ENCODE measurements at regions of chr20 and their contacts with region 1.

Region 1: DNA sequence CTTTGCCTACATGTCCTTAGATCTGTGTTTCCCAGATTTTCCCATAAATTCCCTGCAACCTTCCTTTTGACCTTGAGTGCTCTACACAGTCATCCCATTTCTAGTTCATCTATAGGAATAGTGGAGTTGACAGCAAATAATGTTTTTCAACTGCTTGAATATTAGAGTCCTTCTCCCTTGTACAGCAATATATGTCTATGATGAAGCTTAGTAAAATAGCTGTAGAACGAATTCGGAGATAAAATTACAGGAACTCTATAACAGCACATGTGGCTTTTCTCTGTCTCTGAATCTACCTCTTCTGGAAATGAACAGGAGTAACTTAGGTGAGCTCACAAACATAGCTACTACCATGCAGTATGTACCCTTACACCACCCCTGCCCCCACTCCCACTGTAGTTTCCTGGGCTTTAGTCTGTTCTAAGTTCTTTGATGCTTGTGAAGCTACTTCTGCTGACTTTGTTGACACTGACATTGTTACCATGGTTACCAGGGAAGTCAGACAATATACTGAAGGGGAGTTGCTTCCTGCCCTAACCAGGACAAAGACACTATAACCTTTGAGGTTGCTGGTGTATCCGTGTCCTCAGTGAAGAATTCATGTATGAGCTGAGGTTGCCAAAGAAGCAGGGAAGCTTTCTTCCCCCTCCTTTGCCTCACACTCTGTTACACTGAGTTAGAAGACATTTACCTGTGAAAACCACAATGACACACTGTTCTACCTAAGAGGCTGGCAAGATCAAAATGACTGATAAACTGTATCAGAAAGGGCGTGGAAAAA is 35.8 kb upstream of the SHLD1 start:
- DNase-seq: peak; percentile 28 to 98 (median 96)
- ATAC-seq: peak; percentile 94
- H3K4me3 ChIP-seq: peak overlapping the region; percentile 3
- H3K4me3 Mint-ChIP-seq: peak overlapping the region; percentile 52 to 81 (median 72)
- H3K27ac ChIP-seq: peak overlapping the region; percentile 87
- H3K27ac Mint-ChIP-seq: peak overlapping the region; percentile 81 to 100 (median 95)
- H3K4me1 ChIP-seq: peaks cover 21 to 28% of the 10 kb centered on the region in 2 donors
- H3K4me1 Mint-ChIP-seq: peaks cover 15 to 59% (median 51%) of the 10 kb centered on the region in 7 donors
- H3K27me3 ChIP-seq: no peaks in the 10 kb centered on the region
- H3K27me3 Mint-ChIP-seq: peaks cover 0 to 4% (median 0%) of the 10 kb centered on the region in 5 donors

Region 2: DNA sequence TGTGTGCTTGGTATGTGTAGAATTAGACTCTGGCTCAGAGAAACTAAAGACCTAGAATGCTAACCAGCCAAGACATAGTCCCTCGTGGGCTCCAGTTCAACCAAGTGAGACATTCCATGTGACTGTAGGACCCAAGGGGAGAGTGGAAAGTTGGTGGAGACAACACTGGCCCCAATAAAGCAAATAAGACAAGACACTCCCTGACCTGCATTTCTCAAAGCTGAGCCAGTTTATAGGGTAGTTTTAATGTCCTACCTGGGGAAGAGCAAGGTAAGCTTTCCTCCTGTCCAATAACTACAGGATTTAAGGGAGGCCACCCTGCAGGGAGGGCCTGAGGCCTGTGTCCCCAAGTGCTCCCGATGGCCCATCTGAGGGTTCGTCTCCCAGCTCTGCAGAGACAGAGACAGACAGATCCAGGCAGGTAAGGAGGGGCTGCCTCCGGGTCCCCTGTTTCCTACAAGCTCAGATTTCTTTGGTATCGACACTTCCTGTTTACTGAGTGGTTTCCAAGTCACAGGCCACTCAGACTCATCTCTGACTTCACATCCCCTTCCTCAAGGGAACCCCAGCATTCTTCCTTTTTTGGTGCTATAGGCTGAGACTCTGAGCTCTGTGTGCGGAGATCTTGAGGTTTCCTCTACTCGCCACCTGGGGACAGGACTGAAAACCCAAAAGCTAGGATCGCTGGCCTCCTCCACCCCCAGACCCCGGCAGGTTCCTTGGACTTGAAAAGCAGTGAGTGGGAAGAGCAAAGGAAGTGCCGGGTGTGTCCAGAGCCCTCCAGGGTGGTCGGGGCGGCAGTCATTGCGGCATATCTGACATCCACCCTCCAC is 900.4 kb before region 1 on chr20:
- CTCF ChIA-PET with region 1: no interaction called
- POLR2A ChIA-PET with region 1: no interaction called
- intact Hi-C with region 1: loop called in 1 of 2 experiments (anchors 10 kb)
- DNase-seq: peak; percentile 40 to 91 (median 88)
- ATAC-seq: peak; percentile 80
- H3K4me3 ChIP-seq: peak overlapping the region; percentile 86
- H3K4me3 Mint-ChIP-seq: peak overlapping the region; percentile 78 to 99 (median 92)
- H3K27ac ChIP-seq: peak overlapping the region; percentile 98
- H3K27ac Mint-ChIP-seq: peak overlapping the region; percentile 97 to 100 (median 99)
- H3K4me1 ChIP-seq: peaks cover 68 to 69% of the 10 kb centered on the region in 2 donors
- H3K4me1 Mint-ChIP-seq: peaks cover 56 to 92% (median 88%) of the 10 kb centered on the region in 7 donors
- H3K27me3 ChIP-seq: no peaks in the 10 kb centered on the region
- H3K27me3 Mint-ChIP-seq: no peaks in the 10 kb centered on the region

Region 3: DNA sequence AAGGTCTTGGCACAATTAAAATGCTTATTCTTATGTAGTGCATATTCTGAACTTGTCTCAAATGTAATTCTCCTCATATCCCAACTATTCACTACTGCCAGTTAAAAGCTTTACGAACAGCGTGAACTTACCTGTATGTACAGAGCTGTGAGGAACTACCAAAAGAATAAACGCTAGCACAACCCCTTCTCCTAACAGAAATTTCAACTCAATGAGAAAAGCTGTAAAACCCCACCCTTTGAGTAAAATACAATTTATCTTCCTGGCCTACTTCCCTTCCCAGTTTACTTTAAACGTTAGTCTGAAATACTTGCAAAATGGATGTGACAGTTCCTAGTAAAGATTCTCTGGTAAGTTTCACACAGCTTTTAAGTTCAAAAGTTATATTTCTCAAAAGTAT is 129.8 kb before region 1 on chr20:
- CTCF ChIA-PET with region 1: no interaction called
- POLR2A ChIA-PET with region 1: no interaction called
- intact Hi-C with region 1: no loop called
- DNase-seq: no peak
- ATAC-seq: no peak
- H3K4me3 ChIP-seq: no peak overlapping the region
- H3K4me3 Mint-ChIP-seq: peak overlapping the region in 2 of 10 donors; percentile 3 to 37
- H3K27ac ChIP-seq: no peak overlapping the region
- H3K27ac Mint-ChIP-seq: peak overlapping the region in 5 of 9 donors; percentile 5 to 61 (median 43)
- H3K4me1 ChIP-seq: peaks cover 9 to 19% of the 10 kb centered on the region in 2 donors
- H3K4me1 Mint-ChIP-seq: peaks cover 0 to 65% (median 38%) of the 10 kb centered on the region in 7 donors
- H3K27me3 ChIP-seq: no peaks in the 10 kb centered on the region
- H3K27me3 Mint-ChIP-seq: no peaks in the 10 kb centered on the region

Region 4: GRCh38 chr20:5596401-5597193 is 117.9 kb before region 1 on chr20:
- CTCF ChIA-PET with region 1: no interaction called
- POLR2A ChIA-PET with region 1: interaction called, 3 read pairs
- intact Hi-C with region 1: loop called in 1 of 2 experiments (anchors 1 kb)
- DNase-seq: no peak
- ATAC-seq: no peak
- H3K4me3 ChIP-seq: no peak overlapping the region
- H3K4me3 Mint-ChIP-seq: peak overlapping the region in 9 of 10 donors; percentile 2 to 74 (median 29)
- H3K27ac ChIP-seq: peak overlapping the region; percentile 52
- H3K27ac Mint-ChIP-seq: peak overlapping the region; percentile 47 to 88 (median 77)
- H3K4me1 ChIP-seq: peaks cover 21 to 58% of the 10 kb centered on the region in 2 donors
- H3K4me1 Mint-ChIP-seq: peaks cover 38 to 76% (median 70%) of the 10 kb centered on the region in 7 donors
- H3K27me3 ChIP-seq: no peaks in the 10 kb centered on the region
- H3K27me3 Mint-ChIP-seq: no peaks in the 10 kb centered on the region

Region 5: GRCh38 chr20:5658912-5659345 is 55.5 kb before region 1 on chr20:
- CTCF ChIA-PET with region 1: no interaction called
- POLR2A ChIA-PET with region 1: no interaction called
- intact Hi-C with region 1: loop called in 1 of 2 experiments (anchors 1 kb)
- DNase-seq: peak in 7 of 9 donors; percentile 20 to 83 (median 60)
- ATAC-seq: peak; percentile 75
- H3K4me3 ChIP-seq: no peak overlapping the region
- H3K4me3 Mint-ChIP-seq: peak overlapping the region in 1 of 10 donors; percentile 9
- H3K27ac ChIP-seq: no peak overlapping the region
- H3K27ac Mint-ChIP-seq: peak overlapping the region in 7 of 9 donors; percentile 0 to 94 (median 65)
- H3K4me1 ChIP-seq: peaks cover 0 to 9% of the 10 kb centered on the region in 2 donors
- H3K4me1 Mint-ChIP-seq: peaks cover 6 to 22% (median 12%) of the 10 kb centered on the region in 7 donors
- H3K27me3 ChIP-seq: no peaks in the 10 kb centered on the region
- H3K27me3 Mint-ChIP-seq: no peaks in the 10 kb centered on the region

Region 6: GRCh38 chr20:5691918-5692618 is 22.4 kb before region 1 on chr20:
- CTCF ChIA-PET with region 1: no interaction called
- POLR2A ChIA-PET with region 1: no interaction called
- intact Hi-C with region 1: no loop called
- DNase-seq: peak in 3 of 9 donors; percentile 10 to 31 (median 12)
- ATAC-seq: peak; percentile 34
- H3K4me3 ChIP-seq: no peak overlapping the region
- H3K4me3 Mint-ChIP-seq: no peak overlapping the region
- H3K27ac ChIP-seq: no peak overlapping the region
- H3K27ac Mint-ChIP-seq: peak overlapping the region in 4 of 9 donors; percentile 7 to 71 (median 40)
- H3K4me1 ChIP-seq: no peaks in the 10 kb centered on the region
- H3K4me1 Mint-ChIP-seq: peaks cover 0 to 10% (median 3%) of the 10 kb centered on the region in 7 donors
- H3K27me3 ChIP-seq: no peaks in the 10 kb centered on the region
- H3K27me3 Mint-ChIP-seq: no peaks in the 10 kb centered on the region

Region 7: DNA sequence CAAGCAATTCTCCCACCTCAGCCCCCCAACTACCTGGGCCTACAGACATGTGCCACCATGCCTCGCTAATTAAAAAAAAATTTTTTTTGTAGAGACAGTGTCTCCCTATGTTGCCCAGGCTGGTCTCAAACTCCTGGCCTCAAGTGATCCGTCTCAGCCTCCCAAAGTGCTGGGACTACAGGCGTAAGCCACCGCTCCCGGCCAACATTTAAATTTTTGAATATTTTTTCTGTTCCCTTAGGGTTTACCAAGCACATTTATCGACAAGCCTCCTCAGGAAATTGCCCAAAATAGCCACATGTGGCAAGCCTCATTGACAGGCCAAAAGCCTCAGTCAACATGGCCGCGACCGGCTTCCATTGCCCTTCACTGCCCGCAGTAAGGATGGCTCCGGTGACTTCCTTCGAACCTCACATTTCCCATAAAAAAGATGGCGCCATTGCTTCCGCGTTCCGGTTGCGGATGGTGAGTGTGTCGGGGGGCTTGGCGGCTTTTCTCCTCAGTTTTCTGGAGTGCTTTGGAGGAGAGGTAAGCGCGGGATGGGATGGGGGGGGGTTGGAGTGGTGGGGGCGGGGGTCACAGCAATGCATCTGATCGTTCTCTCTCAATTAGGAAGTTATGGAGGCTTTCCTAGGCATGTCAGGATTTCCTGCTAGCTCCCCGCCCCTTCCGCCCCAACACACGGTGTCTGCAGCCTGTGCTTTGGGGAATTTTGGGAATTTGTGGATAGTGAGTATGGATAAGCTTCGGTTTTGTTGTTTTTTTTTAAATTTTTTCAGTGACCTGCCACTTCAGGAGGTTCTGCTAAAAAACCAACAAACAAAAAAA is 35.7 kb after region 1 on chr20 and contains the start of gene SHLD1:
- CTCF ChIA-PET with region 1: no interaction called
- POLR2A ChIA-PET with region 1: interaction called, 10 read pairs
- intact Hi-C with region 1: loop called (anchors 1 kb)
- DNase-seq: peak; percentile 56 to 86 (median 80)
- ATAC-seq: peak; percentile 98
- H3K4me3 ChIP-seq: peak within 1 kb of the TSS; percentile 70
- H3K4me3 Mint-ChIP-seq: peak within 1 kb of the TSS; percentile 81 to 97 (median 92)
- H3K27ac ChIP-seq: peak within 1 kb of the TSS; percentile 79
- H3K27ac Mint-ChIP-seq: peak within 1 kb of the TSS; percentile 91 to 100 (median 94)
- H3K4me1 ChIP-seq: peaks cover 5 to 14% of the 10 kb centered on the region in 2 donors
- H3K4me1 Mint-ChIP-seq: peaks cover 15 to 38% (median 28%) of the 10 kb centered on the region in 7 donors
- H3K27me3 ChIP-seq: no peaks in the 10 kb centered on the region
- H3K27me3 Mint-ChIP-seq: peaks cover 0 to 4% (median 0%) of the 10 kb centered on the region in 5 donors
- total RNA-seq, gene SHLD1: 12.1 to 14.2 (median 13.2) TPM

Region 8: DNA sequence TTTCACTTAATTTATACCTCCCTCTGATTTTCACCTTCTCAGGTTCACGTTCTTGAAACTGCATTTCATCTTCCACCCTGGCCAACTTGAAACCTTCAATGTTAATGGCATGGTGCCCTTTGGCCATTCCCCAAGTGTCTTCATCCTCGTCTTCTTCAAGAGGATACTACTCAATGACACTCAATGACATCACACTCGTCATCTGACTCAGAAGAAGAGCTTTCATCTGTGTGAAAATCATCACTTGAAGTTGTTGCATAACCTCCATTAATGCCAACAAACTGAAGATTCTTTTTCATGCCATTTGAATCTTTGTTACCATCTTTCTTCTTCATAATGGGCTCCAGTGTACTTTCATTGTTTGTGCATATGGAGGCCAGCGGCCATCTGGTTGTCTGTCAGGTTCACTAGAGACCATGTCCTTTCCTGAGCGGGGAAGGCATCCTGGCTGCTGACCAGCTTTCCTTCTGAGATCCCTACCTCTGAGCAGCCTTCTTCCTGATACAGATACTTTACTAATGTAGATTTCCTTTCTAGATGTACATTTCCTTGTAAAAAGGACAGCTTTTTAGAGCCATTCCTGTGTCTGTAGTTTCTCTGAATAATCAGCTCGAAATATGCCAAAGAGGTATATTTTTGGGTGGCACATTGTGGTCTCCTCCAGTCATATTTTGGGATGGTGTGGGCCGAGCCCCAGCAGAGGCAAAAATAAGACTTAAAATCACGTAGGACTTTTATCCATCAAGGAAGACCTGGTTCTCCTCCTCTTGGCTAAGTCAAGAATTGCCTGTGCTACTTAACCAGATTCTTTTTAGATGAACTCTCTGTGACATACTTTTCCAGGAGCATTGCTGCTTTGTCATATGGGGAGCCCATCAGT is 214.6 kb after region 1 on chr20:
- CTCF ChIA-PET with region 1: no interaction called
- POLR2A ChIA-PET with region 1: no interaction called
- intact Hi-C with region 1: no loop called
- DNase-seq: no peak
- ATAC-seq: no peak
- H3K4me3 ChIP-seq: no peak overlapping the region
- H3K4me3 Mint-ChIP-seq: no peak overlapping the region
- H3K27ac ChIP-seq: no peak overlapping the region
- H3K27ac Mint-ChIP-seq: no peak overlapping the region
- H3K4me1 ChIP-seq: no peaks in the 10 kb centered on the region
- H3K4me1 Mint-ChIP-seq: peaks cover 0 to 3% (median 0%) of the 10 kb centered on the region in 7 donors
- H3K27me3 ChIP-seq: no peaks in the 10 kb centered on the region
- H3K27me3 Mint-ChIP-seq: peaks cover 0 to 16% (median 7%) of the 10 kb centered on the region in 5 donors

Region 9: GRCh38 chr20:5950271-5951031 is 236.0 kb after region 1 on chr20 and contains the starts of genes MCM8 and TRMT6:
- CTCF ChIA-PET with region 1: no interaction called
- POLR2A ChIA-PET with region 1: no interaction called
- intact Hi-C with region 1: loop called in 1 of 2 experiments (anchors 1 kb)
- DNase-seq: peak; percentile 82 to 97 (median 95)
- ATAC-seq: peak; percentile 97
- H3K4me3 ChIP-seq: peak within 1 kb of the TSS; percentile 89
- H3K4me3 Mint-ChIP-seq: peak within 1 kb of the TSS; percentile 91 to 99 (median 96)
- H3K27ac ChIP-seq: peak within 1 kb of the TSS; percentile 82
- H3K27ac Mint-ChIP-seq: peak within 1 kb of the TSS; percentile 91 to 100 (median 97)
- H3K4me1 ChIP-seq: peaks cover 13 to 17% of the 10 kb centered on the region in 2 donors
- H3K4me1 Mint-ChIP-seq: peaks cover 7 to 61% (median 45%) of the 10 kb centered on the region in 7 donors
- H3K27me3 ChIP-seq: no peaks in the 10 kb centered on the region
- H3K27me3 Mint-ChIP-seq: peaks cover 0 to 4% (median 0%) of the 10 kb centered on the region in 5 donors
- total RNA-seq, gene MCM8: 2.6 to 22.7 (median 10.8) TPM
- total RNA-seq, gene TRMT6: 14.5 to 18.5 (median 17.8) TPM

Measured in naive thymus-derived CD4-positive, alpha-beta T cell (primary cell).